Thyroid gland (tissue), 4 donors: ENCODE measurements at regions of chr12 and their contacts with region 1.

Region 1: DNA sequence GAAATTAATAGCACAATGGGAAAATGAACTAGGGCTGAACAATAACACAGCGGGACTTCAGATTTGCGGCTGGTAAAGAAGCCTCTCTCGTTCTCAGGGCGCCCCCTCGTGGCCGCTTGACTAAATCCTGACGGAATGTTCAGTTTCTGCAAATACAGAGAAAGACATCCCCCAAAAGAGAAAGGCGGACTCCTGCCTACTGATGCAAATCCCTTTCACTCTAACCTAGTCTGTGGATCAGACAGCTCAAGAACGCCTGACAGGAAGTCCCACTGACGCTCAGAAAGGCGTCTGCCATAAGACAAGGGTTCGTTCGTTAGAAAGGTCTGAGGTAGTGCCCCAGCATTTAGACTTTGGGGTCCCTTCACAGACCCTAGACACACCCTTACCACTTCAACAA is 2.5 kb downstream of the NUAK1 start:
- DNase-seq: peak; percentile 86 to 93
- H3K4me3 ChIP-seq: peak overlapping the region in 1 of 3 donors; percentile 6
- H3K27ac ChIP-seq: peak overlapping the region in 2 of 3 donors; percentile 73 to 91
- H3K4me1 ChIP-seq: peaks cover 30 to 35% of the 10 kb centered on the region in 2 donors
- H3K27me3 ChIP-seq: no peaks in the 10 kb centered on the region
- CTCF ChIP-seq: peak; percentile 73 to 90 (median 82)
- POLR2A ChIP-seq: peak in 1 of 2 donors; percentile 20

Region 2: GRCh38 chr12:105420659-105421240 is 715.5 kb before region 1 on chr12:
- intact Hi-C with region 1: loop called (anchors 2 kb)
- DNase-seq: peak; percentile 78 to 87
- H3K4me3 ChIP-seq: no peak overlapping the region
- H3K27ac ChIP-seq: no peak overlapping the region
- H3K4me1 ChIP-seq: no peaks in the 10 kb centered on the region
- H3K27me3 ChIP-seq: no peaks in the 10 kb centered on the region
- CTCF ChIP-seq: peak; percentile 85 to 98 (median 90)
- POLR2A ChIP-seq: no peak

Region 3: GRCh38 chr12:105705765-105706164 is 430.5 kb before region 1 on chr12:
- intact Hi-C with region 1: loop called (anchors 5 kb)
- DNase-seq: peak; percentile 50 to 67
- H3K4me3 ChIP-seq: no peak overlapping the region
- H3K27ac ChIP-seq: no peak overlapping the region
- H3K4me1 ChIP-seq: peaks cover 8 to 23% of the 10 kb centered on the region in 2 donors
- H3K27me3 ChIP-seq: no peaks in the 10 kb centered on the region
- CTCF ChIP-seq: peak; percentile 45 to 79 (median 73)
- POLR2A ChIP-seq: no peak

Region 4: DNA sequence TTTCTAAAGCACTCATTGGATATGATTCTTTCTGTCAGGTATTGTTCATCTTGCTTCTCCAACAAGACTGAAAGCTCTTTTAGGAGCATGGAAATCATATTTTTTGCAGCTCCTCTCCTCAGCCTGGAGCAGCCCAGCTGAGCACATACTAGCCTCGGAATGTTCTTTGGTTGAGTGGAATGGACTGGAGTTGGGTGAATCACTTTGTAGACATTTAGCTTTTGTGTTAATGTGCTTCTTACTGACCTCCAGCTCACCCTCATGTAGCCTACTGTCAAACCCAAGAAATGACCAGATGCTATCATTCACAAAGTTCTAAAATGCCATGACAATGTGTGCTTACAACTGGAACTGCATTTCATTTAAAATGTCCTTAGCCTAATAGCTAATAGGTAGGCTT is 158.6 kb before region 1 on chr12:
- intact Hi-C with region 1: no loop called
- DNase-seq: no peak
- H3K4me3 ChIP-seq: no peak overlapping the region
- H3K27ac ChIP-seq: no peak overlapping the region
- H3K4me1 ChIP-seq: peaks cover 5 to 10% of the 10 kb centered on the region in 2 donors
- H3K27me3 ChIP-seq: no peaks in the 10 kb centered on the region
- CTCF ChIP-seq: no peak
- POLR2A ChIP-seq: no peak